ENCODE measurements at regions of chr4 and their contacts with region 1.

Region 1: GRCh38 chr4:42371306-42372252 is 25.7 kb upstream of the SHISA3 start:
- DNase-seq: peak; percentile 79
- H3K4me3 ChIP-seq: no peak overlapping the region
- H3K27ac ChIP-seq: no peak overlapping the region
- H3K4me1 ChIP-seq: no peaks in the 10 kb centered on the region
- H3K27me3 ChIP-seq: no peaks in the 10 kb centered on the region
- CTCF ChIP-seq: peak; percentile 41 to 58
- POLR2A ChIP-seq: no peak

Region 2: DNA sequence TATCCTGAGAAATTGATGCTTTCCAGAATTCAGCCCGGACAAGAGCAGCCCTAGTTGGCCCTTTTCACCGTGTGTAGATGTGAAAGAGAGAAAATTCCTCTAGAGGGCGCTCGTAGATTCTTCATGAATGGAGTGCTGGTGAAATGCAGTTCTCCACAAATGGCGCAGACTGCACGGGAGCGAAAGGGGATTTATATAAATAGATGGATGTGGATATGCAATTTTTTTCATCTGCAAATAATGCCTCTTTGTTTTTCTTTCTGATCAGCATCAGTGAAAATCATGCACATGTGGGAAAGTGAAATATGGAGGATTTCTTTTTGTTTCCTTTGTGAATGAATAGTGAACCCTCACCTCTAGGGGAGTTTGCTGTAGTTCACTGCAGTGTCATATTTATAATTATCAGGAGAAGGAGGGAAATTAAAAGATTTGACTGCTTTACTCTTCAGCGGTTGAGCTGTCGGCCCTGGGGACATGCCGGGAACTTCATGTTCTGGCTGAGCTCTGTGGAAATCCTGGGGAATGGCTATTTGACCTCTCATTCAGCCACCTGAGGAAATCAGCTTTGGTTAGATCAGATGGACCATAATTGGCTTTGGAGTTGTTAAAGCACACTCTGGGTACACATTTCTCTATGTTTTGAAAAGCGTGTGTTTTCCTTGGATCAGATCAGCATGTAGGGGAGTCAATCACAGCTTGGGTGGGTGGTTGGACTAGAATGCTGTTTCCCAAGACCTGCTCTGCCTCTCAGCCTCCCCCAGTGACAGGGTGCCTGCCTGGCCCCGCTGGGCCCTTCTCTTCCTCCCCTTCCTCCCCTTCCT is 89.3 kb before region 1 on chr4:
- CTCF ChIA-PET with region 1: interaction called, 84 read pairs
- POLR2A ChIA-PET with region 1: no interaction called
- dilution Hi-C with region 1: no loop called
- intact Hi-C with region 1: loop called (anchors 1 kb)
- DNase-seq: peak; percentile 71
- H3K4me3 ChIP-seq: no peak overlapping the region
- H3K27ac ChIP-seq: no peak overlapping the region
- H3K4me1 ChIP-seq: peaks cover 3% of the 10 kb centered on the region
- H3K27me3 ChIP-seq: peaks cover 0 to 4% of the 10 kb centered on the region in 2 experiments
- CTCF ChIP-seq: peak; percentile 56 to 71
- POLR2A ChIP-seq: no peak

Region 3: DNA sequence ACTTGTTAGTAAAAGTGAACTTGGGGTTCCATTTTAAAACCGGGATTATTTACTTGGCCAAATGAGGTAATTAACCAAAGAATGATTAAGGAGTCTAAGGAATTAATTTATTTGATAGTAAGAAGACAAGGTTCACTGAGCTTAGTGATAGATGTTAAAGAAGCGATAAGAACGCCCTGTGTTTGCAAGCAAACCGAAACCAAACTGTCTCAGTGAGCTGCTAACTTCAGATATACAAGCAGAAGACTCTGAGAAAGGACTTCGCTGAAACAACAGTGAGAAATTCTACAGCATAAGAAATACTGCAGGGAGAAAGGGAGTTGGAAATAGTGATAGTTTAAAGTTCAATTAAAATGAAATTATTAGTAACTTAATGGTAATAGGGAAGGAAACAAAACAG is 11.9 kb before region 1 on chr4:
- CTCF ChIA-PET with region 1: interaction called, 21 read pairs
- POLR2A ChIA-PET with region 1: no interaction called
- dilution Hi-C with region 1: no loop called
- intact Hi-C with region 1: no loop called
- DNase-seq: peak; percentile 46
- H3K4me3 ChIP-seq: peak overlapping the region in 2 of 3 experiments; percentile 12 to 49
- H3K27ac ChIP-seq: no peak overlapping the region
- H3K4me1 ChIP-seq: no peaks in the 10 kb centered on the region
- H3K27me3 ChIP-seq: peaks cover 2% of the 10 kb centered on the region in 2 experiments
- CTCF ChIP-seq: no peak
- POLR2A ChIP-seq: no peak

Region 4: GRCh38 chr4:42460043-42460442 is 88.5 kb after region 1 on chr4:
- CTCF ChIA-PET with region 1: interaction called, 4 read pairs
- POLR2A ChIA-PET with region 1: no interaction called
- dilution Hi-C with region 1: no loop called
- intact Hi-C with region 1: loop called (anchors 5 kb)
- DNase-seq: no peak
- H3K4me3 ChIP-seq: no peak overlapping the region
- H3K27ac ChIP-seq: no peak overlapping the region
- H3K4me1 ChIP-seq: no peaks in the 10 kb centered on the region
- H3K27me3 ChIP-seq: no peaks in the 10 kb centered on the region
- CTCF ChIP-seq: no peak
- POLR2A ChIP-seq: no peak

Region 5: DNA sequence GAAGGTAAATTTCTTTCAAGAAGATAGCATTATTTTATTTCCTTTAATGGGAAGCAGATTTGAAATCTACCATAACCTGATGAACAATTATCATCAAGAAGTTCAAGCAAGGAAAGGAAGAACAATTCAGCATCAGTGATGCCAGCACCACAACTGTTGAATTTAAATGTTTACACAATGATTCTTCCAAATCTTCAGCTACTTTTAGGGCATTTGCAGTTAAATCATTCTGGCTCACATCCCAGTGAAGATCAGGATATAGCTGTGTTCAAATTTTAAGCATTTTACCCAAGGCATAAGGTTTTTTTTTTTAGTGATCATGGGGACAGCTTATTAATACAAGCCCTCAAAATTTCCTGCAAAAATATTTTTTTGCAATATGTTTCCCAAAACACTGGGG is 138.6 kb after region 1 on chr4:
- CTCF ChIA-PET with region 1: interaction called, 14 read pairs
- POLR2A ChIA-PET with region 1: no interaction called
- dilution Hi-C with region 1: no loop called
- intact Hi-C with region 1: no loop called
- DNase-seq: no peak
- H3K4me3 ChIP-seq: no peak overlapping the region
- H3K27ac ChIP-seq: no peak overlapping the region
- H3K4me1 ChIP-seq: no peaks in the 10 kb centered on the region
- H3K27me3 ChIP-seq: no peaks in the 10 kb centered on the region
- CTCF ChIP-seq: no peak
- POLR2A ChIP-seq: no peak

Region 6: GRCh38 chr4:43550981-43551627 is 1179.5 kb after region 1 on chr4:
- CTCF ChIA-PET with region 1: no interaction called
- POLR2A ChIA-PET with region 1: no interaction called
- dilution Hi-C with region 1: no loop called
- intact Hi-C with region 1: no loop called
- DNase-seq: no peak
- H3K4me3 ChIP-seq: no peak overlapping the region
- H3K27ac ChIP-seq: no peak overlapping the region
- H3K4me1 ChIP-seq: no peaks in the 10 kb centered on the region
- H3K27me3 ChIP-seq: no peaks in the 10 kb centered on the region
- CTCF ChIP-seq: no peak
- POLR2A ChIP-seq: no peak

Measured in endothelial cell of umbilical vein (primary cell).